ENCODE measurements at regions of chr4 and their contacts with region 1.

Region 1: GRCh38 chr4:27239641-27240040 is 379.0 kb downstream of the STIM2 start:
- DNase-seq: no peak
- H3K4me3 Mint-ChIP-seq: no peak overlapping the region
- H3K27ac Mint-ChIP-seq: no peak overlapping the region
- H3K4me1 Mint-ChIP-seq: no peaks in the 10 kb centered on the region
- H3K27me3 Mint-ChIP-seq: no peaks in the 10 kb centered on the region
- CTCF ChIP-seq: no peak

Region 2: GRCh38 chr4:27251771-27252170 is 12.1 kb after region 1 on chr4:
- CTCF ChIA-PET with region 1: no interaction called
- intact Hi-C with region 1: no loop called
- DNase-seq: no peak
- H3K4me3 Mint-ChIP-seq: no peak overlapping the region
- H3K27ac Mint-ChIP-seq: no peak overlapping the region
- H3K4me1 Mint-ChIP-seq: no peaks in the 10 kb centered on the region
- H3K27me3 Mint-ChIP-seq: no peaks in the 10 kb centered on the region
- CTCF ChIP-seq: no peak

Region 3: GRCh38 chr4:27289704-27290103 is 50.1 kb after region 1 on chr4:
- CTCF ChIA-PET with region 1: interaction called, 10 read pairs
- intact Hi-C with region 1: no loop called
- DNase-seq: no peak
- H3K4me3 Mint-ChIP-seq: no peak overlapping the region
- H3K27ac Mint-ChIP-seq: no peak overlapping the region
- H3K4me1 Mint-ChIP-seq: no peaks in the 10 kb centered on the region
- H3K27me3 Mint-ChIP-seq: no peaks in the 10 kb centered on the region
- CTCF ChIP-seq: no peak

Measured in Calu3 (cell line).